Calu3 (cell line): ENCODE measurements at regions of chr12 and their contacts with region 1.

Region 1: GRCh38 chr12:120445911-120446843 is at the starts of genes GATC and TRIAP1:
- DNase-seq: peak; percentile 89
- H3K4me3 Mint-ChIP-seq: peak within 1 kb of the TSS; percentile 88
- H3K27ac Mint-ChIP-seq: peak within 1 kb of the TSS; percentile 77
- H3K4me1 Mint-ChIP-seq: peaks cover 12% of the 10 kb centered on the region
- H3K27me3 Mint-ChIP-seq: no peaks in the 10 kb centered on the region
- CTCF ChIP-seq: no peak
- total RNA-seq, gene GATC: 29.7 and 43.7 TPM in 2 replicates
- total RNA-seq, gene TRIAP1: 29.4 and 34.4 TPM in 2 replicates

Region 2: DNA sequence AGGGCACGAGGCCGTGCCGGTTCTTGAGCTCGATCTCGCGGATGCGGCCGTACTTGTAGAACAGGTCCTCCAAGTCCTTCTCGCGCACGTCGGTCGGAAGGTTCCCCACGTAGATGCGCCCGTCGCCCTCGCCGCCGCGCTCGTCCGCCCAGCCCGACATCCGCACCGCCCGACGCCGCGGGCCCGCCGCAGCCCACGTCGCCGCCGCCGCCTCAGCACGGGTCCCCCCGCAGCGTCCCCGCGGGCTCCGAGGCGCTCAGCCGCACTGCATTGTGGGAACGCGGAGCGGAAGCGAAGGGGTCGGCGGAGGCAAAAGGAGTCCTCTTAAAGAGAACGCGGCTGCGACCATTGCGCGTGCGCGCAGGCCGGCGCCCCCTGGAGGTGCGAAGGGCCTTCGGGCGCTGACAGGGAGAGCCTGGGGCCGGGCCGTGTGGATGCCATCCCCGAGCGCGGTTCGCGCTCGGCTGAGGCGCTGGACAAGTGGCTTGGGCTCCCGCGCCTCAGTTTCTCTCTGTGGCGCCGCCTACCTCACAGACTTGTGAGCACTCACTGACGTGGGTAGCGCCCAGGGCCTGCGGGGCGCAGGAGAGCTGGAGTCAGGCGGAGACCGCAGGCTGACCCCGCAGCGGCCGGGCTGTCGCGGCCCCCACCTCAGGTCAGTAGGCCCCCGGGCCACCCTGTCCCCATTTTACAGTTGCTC is 23.4 kb after region 1 on chr12 and contains the start of gene SRSF9:
- CTCF ChIA-PET with region 1: no interaction called
- intact Hi-C with region 1: loop called (anchors 2 kb)
- DNase-seq: peak; percentile 98
- H3K4me3 Mint-ChIP-seq: peak within 1 kb of the TSS; percentile 95
- H3K27ac Mint-ChIP-seq: peak within 1 kb of the TSS; percentile 62
- H3K4me1 Mint-ChIP-seq: peaks cover 49% of the 10 kb centered on the region
- H3K27me3 Mint-ChIP-seq: no peaks in the 10 kb centered on the region
- CTCF ChIP-seq: peak; percentile 93
- total RNA-seq, gene SRSF9: 284 and 292 TPM in 2 replicates

Region 3: DNA sequence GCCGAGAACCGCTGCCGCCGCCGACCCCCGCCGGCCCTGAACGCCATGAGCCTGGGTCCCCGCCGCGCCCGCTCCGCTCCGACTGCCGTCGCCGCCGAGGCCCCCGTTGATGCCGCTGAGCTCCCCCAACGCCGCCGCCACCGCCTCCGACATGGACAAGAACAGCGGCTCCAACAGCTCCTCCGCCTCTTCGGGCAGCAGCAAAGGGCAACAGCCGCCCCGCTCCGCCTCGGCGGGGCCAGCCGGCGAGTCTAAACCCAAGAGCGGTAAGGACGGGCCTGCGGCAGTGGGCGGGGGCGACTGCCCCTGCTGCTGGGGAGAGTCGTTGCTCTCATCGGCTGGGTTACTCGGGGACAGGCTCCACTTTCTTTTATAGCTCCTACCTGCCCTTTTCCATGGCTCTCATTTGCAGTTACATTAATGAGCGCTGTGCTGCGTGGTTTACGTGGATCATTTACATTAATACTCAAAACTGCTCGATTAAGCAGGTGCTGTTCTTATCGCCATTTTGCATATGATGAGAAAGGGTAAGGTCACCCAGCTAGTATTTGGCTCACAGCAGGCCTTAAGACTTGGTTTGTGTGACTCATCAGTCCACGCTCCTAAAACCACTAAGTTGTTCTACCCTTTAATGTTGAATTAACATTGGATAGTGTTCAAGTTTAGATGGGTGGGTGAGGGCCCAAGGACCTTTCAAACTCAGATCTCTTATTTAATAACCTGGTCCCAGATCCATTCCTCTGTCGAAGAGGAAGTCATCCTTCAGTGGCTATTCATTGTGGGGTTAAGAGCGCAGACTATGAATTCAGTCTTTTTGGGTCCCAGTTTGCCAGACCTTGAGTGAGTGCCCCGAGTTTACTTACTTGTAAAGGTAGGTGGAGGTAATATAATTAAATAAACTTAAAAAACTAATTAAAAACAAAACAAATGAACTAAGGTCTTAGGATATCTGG is 88.8 kb after region 1 on chr12:
- CTCF ChIA-PET with region 1: interaction called, 15 read pairs
- intact Hi-C with region 1: no loop called
- DNase-seq: peak; percentile 67
- H3K4me3 Mint-ChIP-seq: peak overlapping the region; percentile 98
- H3K27ac Mint-ChIP-seq: peak overlapping the region; percentile 96
- H3K4me1 Mint-ChIP-seq: peaks cover 21% of the 10 kb centered on the region
- H3K27me3 Mint-ChIP-seq: no peaks in the 10 kb centered on the region
- CTCF ChIP-seq: no peak

Region 4: GRCh38 chr12:120654656-120655055 is 208.5 kb after region 1 on chr12:
- CTCF ChIA-PET with region 1: no interaction called
- intact Hi-C with region 1: no loop called
- DNase-seq: no peak
- H3K4me3 Mint-ChIP-seq: no peak overlapping the region
- H3K27ac Mint-ChIP-seq: no peak overlapping the region
- H3K4me1 Mint-ChIP-seq: peaks cover 8% of the 10 kb centered on the region
- H3K27me3 Mint-ChIP-seq: peaks cover 58% of the 10 kb centered on the region
- CTCF ChIP-seq: no peak

Region 5: GRCh38 chr12:121300083-121300819 is 854.1 kb after region 1 on chr12:
- CTCF ChIA-PET with region 1: no interaction called
- intact Hi-C with region 1: no loop called
- DNase-seq: no peak
- H3K4me3 Mint-ChIP-seq: no peak overlapping the region
- H3K27ac Mint-ChIP-seq: no peak overlapping the region
- H3K4me1 Mint-ChIP-seq: no peaks in the 10 kb centered on the region
- H3K27me3 Mint-ChIP-seq: no peaks in the 10 kb centered on the region
- CTCF ChIP-seq: no peak